Left colon (tissue), 2 donors: ENCODE measurements at regions of chr20 and their contacts with region 1.

Region 1: GRCh38 chr20:956330-956951 is 40.3 kb upstream of the ANGPT4 start:
- DNase-seq: peak in 1 of 2 donors; percentile 66
- ATAC-seq: peak; percentile 83

Region 2: DNA sequence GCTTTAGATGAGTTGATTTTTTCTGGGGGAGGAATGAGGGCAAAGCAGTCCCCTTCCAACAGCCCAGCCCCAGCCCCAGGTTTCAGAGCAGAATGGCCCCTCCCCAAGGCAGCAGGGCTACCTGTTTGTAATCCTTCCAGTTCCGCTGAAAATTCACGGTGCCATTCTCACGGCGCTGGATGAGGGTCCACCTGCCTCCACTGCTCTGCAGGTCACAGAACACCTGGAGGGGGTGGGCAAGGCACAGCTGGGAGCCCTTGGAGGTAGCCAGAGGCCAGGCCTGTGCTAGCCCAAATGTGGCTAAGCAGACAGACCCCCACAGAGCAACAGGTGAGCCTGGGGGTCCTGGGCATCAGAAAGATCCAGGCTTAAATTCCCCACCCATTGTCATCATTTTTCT is 76.8 kb before region 1 on chr20:
- intact Hi-C with region 1: no loop called
- DNase-seq: no peak
- ATAC-seq: no peak

Region 3: GRCh38 chr20:891058-891705 is 65.3 kb before region 1 on chr20:
- intact Hi-C with region 1: loop called in 1 of 2 experiments (anchors 10 kb)
- DNase-seq: no peak
- ATAC-seq: no peak

Region 4: DNA sequence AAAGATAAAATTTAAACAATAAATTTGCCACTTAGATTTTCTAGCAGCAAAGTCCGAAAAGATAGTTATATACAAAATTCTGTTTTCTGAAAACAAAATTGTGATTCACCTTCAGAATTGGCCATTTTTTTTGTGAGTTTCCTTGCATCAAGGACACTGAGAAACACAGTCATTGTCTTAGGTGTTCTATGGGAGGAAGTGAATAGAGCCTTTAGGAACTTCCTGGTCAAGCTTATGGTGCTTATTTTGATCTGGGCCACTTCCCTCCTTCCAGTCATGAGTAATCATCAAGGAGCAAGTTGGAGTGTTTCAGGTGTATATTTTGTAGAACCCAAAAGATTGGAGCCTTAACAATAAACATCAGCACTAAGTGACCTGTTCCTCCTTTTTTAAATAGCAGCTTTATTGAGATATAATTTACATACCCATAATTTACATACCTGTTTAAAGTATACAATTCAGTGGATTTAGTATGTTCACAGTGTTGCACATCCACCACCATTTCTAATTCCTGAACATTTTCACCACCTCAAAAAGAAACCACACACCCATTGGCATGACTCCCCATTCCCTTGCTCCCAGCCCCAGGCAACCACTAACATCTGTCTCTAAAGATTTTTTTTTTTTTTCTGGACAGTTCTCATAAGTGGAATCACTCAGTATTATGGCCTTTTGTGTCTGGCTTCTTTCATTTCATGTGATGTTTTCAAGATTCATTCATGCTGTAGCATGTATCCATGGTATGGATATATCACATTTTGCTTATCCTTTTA is 210.7 kb after region 1 on chr20:
- intact Hi-C with region 1: no loop called
- DNase-seq: no peak
- ATAC-seq: no peak